H1 (cell line): ENCODE measurements at regions of chr3 and their contacts with region 1.

Region 1: GRCh38 chr3:50611464-50612233 is at the start of gene CISH:
- DNase-seq: peak; percentile 84 to 97
- H3K4me3 ChIP-seq: peak within 1 kb of the TSS; percentile 39 to 70 (median 50)
- H3K27ac ChIP-seq: no peak within 1 kb of the TSS
- H3K4me1 ChIP-seq: peaks cover 0 to 14% (median 5%) of the 10 kb centered on the region in 4 experiments; a peak in 5 of 7 replicates
- H3K27me3 ChIP-seq: peaks cover 12 to 39% (median 32%) of the 10 kb centered on the region in 4 experiments; a peak in 6 of 7 replicates
- CTCF ChIP-seq: peak in 2 of 3 experiments; percentile 63 to 81; a peak in 3 of 4 replicates
- EP300 ChIP-seq: no peak
- POLR2A ChIP-seq: no peak
- RAD21 ChIP-seq: peak; percentile 30 to 46; a peak in 2 of 4 replicates
- total RNA-seq, gene CISH: 1.9 and 3.1 TPM in 2 replicates

Region 2: DNA sequence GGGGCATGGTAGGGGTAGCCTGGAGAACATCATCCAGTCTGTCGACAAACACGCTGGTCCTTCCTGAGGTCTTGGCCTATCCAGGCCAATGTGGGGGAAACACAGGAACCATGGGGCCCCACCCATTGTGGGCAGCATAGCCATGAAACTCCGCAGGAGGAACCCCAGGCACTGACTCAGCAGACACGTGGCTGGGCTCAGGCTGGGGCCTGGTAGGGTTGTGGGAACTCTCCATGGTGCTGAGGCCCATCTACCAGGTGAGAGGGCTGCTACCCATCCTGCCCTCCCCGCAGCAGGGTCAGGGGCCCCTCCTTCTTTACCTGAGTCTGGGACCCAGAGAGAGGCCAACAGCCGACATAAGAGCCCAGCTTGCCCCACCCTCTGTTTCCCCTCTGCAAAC is 85.7 kb before region 1 on chr3:
- CTCF ChIA-PET with region 1: interaction called, 13 read pairs
- POLR2A ChIA-PET with region 1: no interaction called
- DNase-seq: peak in 1 of 2 experiments; percentile 87
- H3K4me3 ChIP-seq: no peak overlapping the region
- H3K27ac ChIP-seq: no peak overlapping the region
- H3K4me1 ChIP-seq: peaks cover 3 to 37% (median 21%) of the 10 kb centered on the region in 4 experiments
- H3K27me3 ChIP-seq: peaks cover 0 to 9% (median 5%) of the 10 kb centered on the region in 4 experiments; a peak in 5 of 7 replicates
- CTCF ChIP-seq: no peak
- EP300 ChIP-seq: no peak
- POLR2A ChIP-seq: no peak
- RAD21 ChIP-seq: 0 out of 4 replicates have a peak, but pooled peaks of 1 of the 2 experiments have one; percentile 8

Region 3: GRCh38 chr3:50587806-50588758 is 23.6 kb before region 1 on chr3:
- CTCF ChIA-PET with region 1: interaction called, 863 read pairs
- POLR2A ChIA-PET with region 1: interaction called, 4 read pairs
- DNase-seq: no peak
- H3K4me3 ChIP-seq: no peak overlapping the region
- H3K27ac ChIP-seq: no peak overlapping the region
- H3K4me1 ChIP-seq: no peaks in the 10 kb centered on the region
- H3K27me3 ChIP-seq: peaks cover 0 to 2% (median 0%) of the 10 kb centered on the region in 4 experiments; a peak in 1 of 7 replicates
- CTCF ChIP-seq: no peak
- EP300 ChIP-seq: no peak
- POLR2A ChIP-seq: no peak
- RAD21 ChIP-seq: no peak

Region 4: DNA sequence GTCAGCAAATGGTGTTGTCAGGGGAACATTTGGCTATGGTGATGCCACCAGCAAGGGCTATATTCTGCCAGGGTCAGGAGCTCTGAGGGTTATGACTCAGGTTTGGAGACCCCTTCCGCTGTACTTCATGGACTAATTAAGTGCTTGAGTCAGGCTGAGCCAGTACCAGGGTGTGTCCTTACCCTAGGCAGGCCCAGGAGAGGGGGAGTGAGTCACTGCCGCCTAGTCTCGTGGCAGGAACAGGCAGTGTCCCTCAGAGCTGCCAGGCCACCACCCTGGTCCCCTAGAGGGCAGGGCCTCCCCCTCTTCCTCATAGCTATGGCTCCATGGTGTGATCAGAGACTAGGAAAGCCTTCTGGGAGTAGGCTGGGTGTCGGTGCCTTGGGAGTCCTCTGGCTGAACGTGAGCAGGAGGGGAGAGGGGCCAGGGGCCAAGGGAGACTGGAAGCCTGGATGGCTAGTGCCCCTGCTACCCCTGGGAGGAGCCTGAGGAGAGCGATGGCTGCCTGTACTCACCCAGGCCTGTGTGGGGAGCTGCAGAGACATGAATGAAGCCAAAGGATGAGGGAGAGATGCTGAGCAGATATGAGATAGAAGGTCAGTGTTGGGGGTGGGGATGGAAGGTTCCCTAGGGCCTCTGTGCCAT is 15.9 kb after region 1 on chr3:
- CTCF ChIA-PET with region 1: interaction called, 1,262 read pairs
- POLR2A ChIA-PET with region 1: interaction called, 20 read pairs
- DNase-seq: no peak
- H3K4me3 ChIP-seq: no peak overlapping the region
- H3K27ac ChIP-seq: peak overlapping the region; percentile 32; the same call in 1 of the 2 replicates
- H3K4me1 ChIP-seq: peaks cover 2 to 21% (median 12%) of the 10 kb centered on the region in 4 experiments
- H3K27me3 ChIP-seq: no peaks in the 10 kb centered on the region
- CTCF ChIP-seq: peak in 2 of 3 experiments; percentile 79 to 82; a peak in 3 of 4 replicates
- EP300 ChIP-seq: no peak
- POLR2A ChIP-seq: no peak
- RAD21 ChIP-seq: peak; percentile 90 to 91

Region 5: GRCh38 chr3:50714946-50715345 is 103.3 kb after region 1 on chr3:
- CTCF ChIA-PET with region 1: no interaction called
- POLR2A ChIA-PET with region 1: no interaction called
- DNase-seq: no peak
- H3K4me3 ChIP-seq: no peak overlapping the region
- H3K27ac ChIP-seq: no peak overlapping the region
- H3K4me1 ChIP-seq: no peaks in the 10 kb centered on the region
- H3K27me3 ChIP-seq: no peaks in the 10 kb centered on the region
- CTCF ChIP-seq: no peak
- EP300 ChIP-seq: no peak
- POLR2A ChIP-seq: no peak
- RAD21 ChIP-seq: no peak

Region 6: DNA sequence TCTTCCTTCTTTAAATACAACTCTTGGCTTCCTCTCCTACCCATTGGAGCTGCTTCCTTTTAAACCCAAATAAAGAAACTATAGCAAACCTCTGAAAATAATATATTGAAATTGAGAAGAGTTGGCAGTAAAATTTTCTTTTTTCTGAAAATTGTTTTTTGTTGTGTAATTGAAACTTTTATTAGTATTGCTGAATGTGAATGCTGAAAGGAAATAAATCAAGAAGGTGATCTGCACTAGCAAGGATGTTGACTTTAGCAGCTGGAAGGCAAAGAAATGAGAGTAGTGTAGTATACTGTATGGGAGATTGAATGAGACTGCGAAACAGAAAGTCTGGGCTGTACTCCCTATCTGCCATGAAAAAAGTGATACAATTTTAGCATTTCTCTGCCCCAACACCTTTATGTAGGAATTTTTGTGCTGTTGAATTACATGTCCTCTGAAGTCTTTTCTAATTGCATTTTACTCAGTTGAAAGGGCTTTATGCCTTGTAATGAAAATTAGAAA is 229.4 kb after region 1 on chr3:
- CTCF ChIA-PET with region 1: no interaction called
- POLR2A ChIA-PET with region 1: no interaction called
- DNase-seq: no peak
- H3K4me3 ChIP-seq: no peak overlapping the region
- H3K27ac ChIP-seq: no peak overlapping the region
- H3K4me1 ChIP-seq: peaks cover 0 to 2% (median 0%) of the 10 kb centered on the region in 4 experiments; a peak in 2 of 7 replicates
- H3K27me3 ChIP-seq: no peaks in the 10 kb centered on the region
- CTCF ChIP-seq: no peak
- EP300 ChIP-seq: no peak
- POLR2A ChIP-seq: no peak
- RAD21 ChIP-seq: no peak

Region 7: GRCh38 chr3:50885070-50885850 is 273.6 kb after region 1 on chr3:
- CTCF ChIA-PET with region 1: interaction called, 17 read pairs
- POLR2A ChIA-PET with region 1: no interaction called
- DNase-seq: peak in 1 of 2 experiments; percentile 61
- H3K4me3 ChIP-seq: no peak overlapping the region
- H3K27ac ChIP-seq: no peak overlapping the region
- H3K4me1 ChIP-seq: no peaks in the 10 kb centered on the region
- H3K27me3 ChIP-seq: no peaks in the 10 kb centered on the region
- CTCF ChIP-seq: peak; percentile 28 to 80 (median 77)
- EP300 ChIP-seq: no peak
- POLR2A ChIP-seq: no peak
- RAD21 ChIP-seq: peak; percentile 91 to 94

Region 8: DNA sequence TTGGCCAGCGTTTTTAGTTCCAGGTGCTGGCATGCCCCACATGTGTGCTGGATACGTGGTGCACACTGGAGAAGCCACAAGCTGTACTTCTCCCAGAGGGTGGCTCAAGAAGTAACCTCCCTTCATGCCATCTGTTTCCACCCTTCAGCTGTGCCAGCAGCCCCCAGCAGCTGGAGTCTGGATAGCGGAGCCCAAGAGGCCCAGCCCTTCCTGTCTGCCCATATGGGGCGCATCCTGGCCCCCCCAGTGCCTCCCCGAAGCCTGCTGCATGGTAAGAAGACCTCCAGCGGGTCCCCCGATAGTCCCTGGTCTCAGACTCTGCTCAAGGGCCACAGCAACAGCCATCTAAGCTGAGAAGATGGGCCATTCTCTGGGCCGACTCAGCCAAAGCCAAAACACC is 767.7 kb after region 1 on chr3:
- CTCF ChIA-PET with region 1: interaction called, 35 read pairs
- POLR2A ChIA-PET with region 1: interaction called, 6 read pairs
- DNase-seq: no peak
- H3K4me3 ChIP-seq: no peak overlapping the region
- H3K27ac ChIP-seq: no peak overlapping the region
- H3K4me1 ChIP-seq: peaks cover 0 to 3% (median 0%) of the 10 kb centered on the region in 4 experiments; a peak in 3 of 7 replicates
- H3K27me3 ChIP-seq: no peaks in the 10 kb centered on the region
- CTCF ChIP-seq: no peak
- EP300 ChIP-seq: no peak
- POLR2A ChIP-seq: no peak
- RAD21 ChIP-seq: no peak